Mammary epithelial cell (primary cell): ENCODE measurements at regions of chr18 and their contacts with region 1.

Region 1: GRCh38 chr18:41096504-41096903 is 858.5 kb upstream of the PIK3C3 start:
- DNase-seq: peak; percentile 35
- H3K4me3 ChIP-seq: no peak overlapping the region
- H3K27ac ChIP-seq: no peak overlapping the region
- H3K4me1 ChIP-seq: peaks cover 5% of the 10 kb centered on the region
- H3K27me3 ChIP-seq: no peaks in the 10 kb centered on the region
- CTCF ChIP-seq: peak; percentile 47 to 58

Region 2: GRCh38 chr18:40159141-40160017 is 937.1 kb before region 1 on chr18:
- CTCF ChIA-PET with region 1: no interaction called
- dilution Hi-C with region 1: no loop called
- in situ Hi-C with region 1: no loop called
- intact Hi-C with region 1: loop called (anchors 5 kb)
- DNase-seq: peak; percentile 34
- H3K4me3 ChIP-seq: no peak overlapping the region
- H3K27ac ChIP-seq: no peak overlapping the region
- H3K4me1 ChIP-seq: no peaks in the 10 kb centered on the region
- H3K27me3 ChIP-seq: no peaks in the 10 kb centered on the region
- CTCF ChIP-seq: peak; percentile 75

Region 3: GRCh38 chr18:40313030-40313642 is 783.4 kb before region 1 on chr18:
- CTCF ChIA-PET with region 1: no interaction called
- dilution Hi-C with region 1: no loop called
- in situ Hi-C with region 1: no loop called
- intact Hi-C with region 1: loop called (anchors 10 kb)
- DNase-seq: peak; percentile 49
- H3K4me3 ChIP-seq: no peak overlapping the region
- H3K27ac ChIP-seq: no peak overlapping the region
- H3K4me1 ChIP-seq: no peaks in the 10 kb centered on the region
- H3K27me3 ChIP-seq: no peaks in the 10 kb centered on the region
- CTCF ChIP-seq: no peak

Region 4: GRCh38 chr18:40529478-40529877 is 567.0 kb before region 1 on chr18:
- CTCF ChIA-PET with region 1: interaction called, 3 read pairs
- dilution Hi-C with region 1: no loop called
- in situ Hi-C with region 1: no loop called
- intact Hi-C with region 1: loop called (anchors 1 kb)
- DNase-seq: peak; percentile 49
- H3K4me3 ChIP-seq: no peak overlapping the region
- H3K27ac ChIP-seq: no peak overlapping the region
- H3K4me1 ChIP-seq: peaks cover 4% of the 10 kb centered on the region
- H3K27me3 ChIP-seq: no peaks in the 10 kb centered on the region
- CTCF ChIP-seq: peak; percentile 4 to 42

Region 5: GRCh38 chr18:40868110-40868858 is 228.2 kb before region 1 on chr18:
- CTCF ChIA-PET with region 1: interaction called, 3 read pairs
- dilution Hi-C with region 1: no loop called
- in situ Hi-C with region 1: no loop called
- intact Hi-C with region 1: loop called (anchors 1 kb)
- DNase-seq: peak; percentile 99
- H3K4me3 ChIP-seq: no peak overlapping the region
- H3K27ac ChIP-seq: peak overlapping the region; percentile 100
- H3K4me1 ChIP-seq: peaks cover 27% of the 10 kb centered on the region
- H3K27me3 ChIP-seq: no peaks in the 10 kb centered on the region
- CTCF ChIP-seq: no peak

Region 6: DNA sequence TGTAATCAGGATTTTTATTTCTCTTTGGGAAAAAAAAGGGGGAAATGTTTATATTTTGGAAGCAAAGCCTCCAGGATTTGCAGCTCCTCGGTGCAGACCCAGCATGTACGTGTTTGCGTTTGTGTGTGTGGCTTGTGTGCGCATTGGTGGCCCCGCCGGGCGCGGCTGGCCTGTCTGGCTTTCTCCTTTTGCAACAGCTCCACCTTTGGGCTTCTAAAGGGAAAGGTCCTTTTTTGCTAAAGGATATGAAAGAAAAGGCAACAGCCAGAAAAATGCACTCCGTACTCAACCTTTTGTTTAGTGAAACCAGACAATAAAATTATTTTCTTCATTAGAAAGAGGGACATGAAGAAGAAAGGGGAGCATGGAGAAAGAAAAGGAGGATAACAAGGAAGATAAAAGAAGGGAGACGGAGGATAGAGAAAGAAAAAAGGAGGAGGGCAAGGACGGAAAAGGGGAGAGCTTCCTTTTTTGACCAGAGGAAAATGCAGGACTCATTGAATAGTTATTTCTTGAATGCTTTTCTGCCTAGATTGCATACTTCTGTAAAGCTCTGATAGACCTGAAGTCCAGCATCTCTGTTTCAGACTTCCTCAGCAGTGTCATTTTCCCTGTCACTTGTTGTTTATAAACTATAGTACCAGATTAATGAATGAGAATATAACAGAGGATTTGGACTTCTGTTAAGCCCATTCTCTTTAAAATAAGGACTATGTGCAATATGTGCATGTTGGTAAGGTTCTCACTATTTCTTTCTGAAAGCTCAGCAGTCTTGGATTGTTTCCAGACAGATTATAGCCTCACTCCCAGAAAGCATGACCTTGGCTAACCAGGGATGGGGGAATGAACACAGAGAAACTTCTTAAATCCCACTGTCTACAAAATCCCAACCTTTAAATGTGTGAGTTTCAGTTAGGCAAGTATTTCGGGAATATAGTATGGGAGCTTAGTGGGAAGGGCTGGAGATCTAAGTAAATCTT is 295.4 kb after region 1 on chr18:
- CTCF ChIA-PET with region 1: no interaction called
- dilution Hi-C with region 1: no loop called
- in situ Hi-C with region 1: loop called in 1 of 2 experiments (anchors 25 kb)
- intact Hi-C with region 1: loop called (anchors 1 kb)
- DNase-seq: peak; percentile 34
- H3K4me3 ChIP-seq: peak overlapping the region; percentile 34 to 61 (median 45)
- H3K27ac ChIP-seq: no peak overlapping the region
- H3K4me1 ChIP-seq: peaks cover 5% of the 10 kb centered on the region
- H3K27me3 ChIP-seq: no peaks in the 10 kb centered on the region
- CTCF ChIP-seq: peak; percentile 61 to 83

Region 7: DNA sequence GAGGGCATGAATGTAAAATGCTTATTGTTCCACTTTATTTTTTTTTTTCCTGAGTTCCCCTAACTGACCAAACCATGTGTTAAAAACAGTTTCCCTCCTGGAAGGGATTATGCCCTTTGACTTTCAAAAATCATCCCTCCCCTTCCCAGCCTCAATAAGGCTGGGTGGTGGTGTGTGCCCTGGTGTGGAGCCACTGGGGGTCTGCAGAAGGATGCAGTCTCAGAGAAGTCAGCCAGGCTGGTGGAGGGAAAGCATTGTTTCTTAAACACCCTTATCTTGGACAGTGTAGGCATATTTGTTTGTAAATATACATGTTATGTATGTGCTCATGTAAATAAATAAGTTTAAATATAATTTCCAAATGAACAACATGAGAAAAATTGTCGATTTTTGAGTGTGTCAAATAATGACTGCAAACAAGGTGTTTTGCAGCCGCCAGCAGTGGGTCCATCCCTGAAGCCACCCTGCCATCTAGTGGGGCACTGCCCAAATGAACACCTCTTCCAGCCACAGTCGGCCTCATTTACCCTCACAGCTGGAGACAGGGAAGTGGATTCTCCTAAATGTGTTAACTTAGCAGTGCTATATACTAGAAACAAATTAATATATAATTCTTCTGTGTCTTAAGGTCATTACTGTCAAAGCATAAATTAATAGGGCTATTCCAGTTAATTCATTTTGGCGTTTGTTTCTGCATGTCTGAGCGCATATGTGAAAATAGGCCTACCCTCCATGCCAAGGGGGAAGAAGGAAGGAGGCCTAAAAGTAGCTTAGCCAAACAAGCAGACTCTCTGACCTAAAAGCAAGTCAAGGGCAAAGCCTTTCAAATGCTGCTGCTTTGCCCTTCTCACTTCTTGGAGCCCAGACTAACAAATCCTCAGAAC is 648.9 kb after region 1 on chr18:
- CTCF ChIA-PET with region 1: no interaction called
- dilution Hi-C with region 1: no loop called
- in situ Hi-C with region 1: no loop called
- intact Hi-C with region 1: loop called (anchors 2 kb)
- DNase-seq: peak; percentile 28
- H3K4me3 ChIP-seq: no peak overlapping the region
- H3K27ac ChIP-seq: no peak overlapping the region
- H3K4me1 ChIP-seq: no peaks in the 10 kb centered on the region
- H3K27me3 ChIP-seq: no peaks in the 10 kb centered on the region
- CTCF ChIP-seq: peak; percentile 64 to 87

Region 8: DNA sequence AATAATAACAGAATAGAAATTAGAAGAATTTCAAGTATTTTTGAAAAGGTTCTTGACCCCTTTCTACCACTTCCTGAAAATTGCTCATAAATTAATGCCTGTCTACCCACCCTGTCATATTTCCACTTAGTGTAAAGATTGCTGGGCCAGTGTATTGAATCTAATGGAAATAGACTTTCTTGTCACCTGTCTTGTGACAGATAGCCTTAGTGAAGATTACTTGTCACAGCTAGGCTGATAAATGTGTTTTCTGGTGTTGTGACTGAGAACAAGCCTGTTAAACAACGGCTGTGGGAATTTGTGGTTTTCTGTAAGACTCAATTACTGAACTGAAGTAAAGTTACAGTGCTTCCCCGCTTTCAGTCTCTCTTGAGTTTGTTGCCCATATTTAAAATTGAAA is 895.6 kb after region 1 on chr18:
- CTCF ChIA-PET with region 1: no interaction called
- dilution Hi-C with region 1: no loop called
- in situ Hi-C with region 1: no loop called
- intact Hi-C with region 1: no loop called
- DNase-seq: no peak
- H3K4me3 ChIP-seq: no peak overlapping the region
- H3K27ac ChIP-seq: no peak overlapping the region
- H3K4me1 ChIP-seq: no peaks in the 10 kb centered on the region
- H3K27me3 ChIP-seq: no peaks in the 10 kb centered on the region
- CTCF ChIP-seq: no peak